Activated CD8-positive, alpha-beta memory T cell treated with anti-CD3 and anti-CD28 coated beads, Interleukin-2, amount 10 ng/mL, durations not matched to agents 7 days and 5 days (primary cell): ENCODE measurements at regions of chr12 and their contacts with region 1.

Region 1: DNA sequence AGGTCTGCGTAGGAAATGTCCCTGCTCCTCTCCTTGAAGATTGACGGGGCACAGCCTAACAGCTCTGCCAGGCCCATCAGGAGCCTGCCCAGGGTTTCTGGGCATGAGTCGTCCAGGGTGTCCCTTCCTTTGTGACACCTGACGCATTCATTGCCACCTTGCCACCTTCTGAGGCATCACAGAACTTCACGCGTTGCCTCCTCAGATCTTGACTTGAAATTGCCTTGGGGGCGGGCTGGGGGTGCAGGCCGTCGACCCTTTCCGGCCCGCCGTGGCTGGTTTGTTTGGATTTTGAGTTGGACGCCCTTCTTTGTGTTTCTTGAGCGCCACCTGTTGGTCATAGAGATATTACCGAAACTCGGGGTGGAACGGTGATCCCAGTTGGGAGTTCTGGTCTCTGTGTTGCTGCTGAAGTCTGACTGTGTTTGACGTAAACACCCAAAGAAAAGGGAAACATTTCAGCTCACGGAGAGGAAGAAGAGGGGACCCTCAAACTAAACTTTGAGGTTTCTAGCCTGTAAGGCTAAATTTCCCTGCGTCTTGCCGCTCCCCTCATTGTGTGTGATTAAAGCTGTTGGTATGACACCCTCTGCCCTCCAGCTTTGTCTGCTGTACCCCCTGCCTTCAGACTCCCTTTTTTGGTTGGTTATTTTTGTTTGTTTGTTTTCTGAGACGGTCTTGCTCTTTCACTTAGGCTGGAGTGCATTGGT is 44.6 kb downstream of the MLXIP start:
- DNase-seq: peak; percentile 77
- ATAC-seq: peak; percentile 73
- H3K4me3 Mint-ChIP-seq: no peak overlapping the region
- H3K27ac Mint-ChIP-seq: peak overlapping the region; percentile 48
- H3K4me1 Mint-ChIP-seq: peaks cover 19% of the 10 kb centered on the region
- H3K27me3 Mint-ChIP-seq: no peaks in the 10 kb centered on the region

Region 2: GRCh38 chr12:121802846-121803630 is 320.2 kb before region 1 on chr12:
- CTCF ChIA-PET with region 1: no interaction called
- DNase-seq: peak; percentile 95
- ATAC-seq: peak; percentile 68
- H3K4me3 Mint-ChIP-seq: peak overlapping the region; percentile 89
- H3K27ac Mint-ChIP-seq: peak overlapping the region; percentile 100
- H3K4me1 Mint-ChIP-seq: peaks cover 34% of the 10 kb centered on the region
- H3K27me3 Mint-ChIP-seq: no peaks in the 10 kb centered on the region

Region 3: GRCh38 chr12:122028165-122028904 is 94.9 kb before region 1 on chr12:
- CTCF ChIA-PET with region 1: interaction called, 12 read pairs
- DNase-seq: no peak
- ATAC-seq: no peak
- H3K4me3 Mint-ChIP-seq: no peak overlapping the region
- H3K27ac Mint-ChIP-seq: no peak overlapping the region
- H3K4me1 Mint-ChIP-seq: peaks cover 20% of the 10 kb centered on the region
- H3K27me3 Mint-ChIP-seq: peaks cover 63% of the 10 kb centered on the region

Region 4: GRCh38 chr12:122048151-122048550 is 75.1 kb before region 1 on chr12:
- CTCF ChIA-PET with region 1: interaction called, 130 read pairs
- DNase-seq: no peak
- ATAC-seq: no peak
- H3K4me3 Mint-ChIP-seq: no peak overlapping the region
- H3K27ac Mint-ChIP-seq: no peak overlapping the region
- H3K4me1 Mint-ChIP-seq: no peaks in the 10 kb centered on the region
- H3K27me3 Mint-ChIP-seq: no peaks in the 10 kb centered on the region

Region 5: GRCh38 chr12:122064025-122064777 is 59.0 kb before region 1 on chr12:
- CTCF ChIA-PET with region 1: interaction called, 17 read pairs
- DNase-seq: peak; percentile 50
- ATAC-seq: peak; percentile 70
- H3K4me3 Mint-ChIP-seq: no peak overlapping the region
- H3K27ac Mint-ChIP-seq: no peak overlapping the region
- H3K4me1 Mint-ChIP-seq: peaks cover 13% of the 10 kb centered on the region
- H3K27me3 Mint-ChIP-seq: no peaks in the 10 kb centered on the region

Region 6: DNA sequence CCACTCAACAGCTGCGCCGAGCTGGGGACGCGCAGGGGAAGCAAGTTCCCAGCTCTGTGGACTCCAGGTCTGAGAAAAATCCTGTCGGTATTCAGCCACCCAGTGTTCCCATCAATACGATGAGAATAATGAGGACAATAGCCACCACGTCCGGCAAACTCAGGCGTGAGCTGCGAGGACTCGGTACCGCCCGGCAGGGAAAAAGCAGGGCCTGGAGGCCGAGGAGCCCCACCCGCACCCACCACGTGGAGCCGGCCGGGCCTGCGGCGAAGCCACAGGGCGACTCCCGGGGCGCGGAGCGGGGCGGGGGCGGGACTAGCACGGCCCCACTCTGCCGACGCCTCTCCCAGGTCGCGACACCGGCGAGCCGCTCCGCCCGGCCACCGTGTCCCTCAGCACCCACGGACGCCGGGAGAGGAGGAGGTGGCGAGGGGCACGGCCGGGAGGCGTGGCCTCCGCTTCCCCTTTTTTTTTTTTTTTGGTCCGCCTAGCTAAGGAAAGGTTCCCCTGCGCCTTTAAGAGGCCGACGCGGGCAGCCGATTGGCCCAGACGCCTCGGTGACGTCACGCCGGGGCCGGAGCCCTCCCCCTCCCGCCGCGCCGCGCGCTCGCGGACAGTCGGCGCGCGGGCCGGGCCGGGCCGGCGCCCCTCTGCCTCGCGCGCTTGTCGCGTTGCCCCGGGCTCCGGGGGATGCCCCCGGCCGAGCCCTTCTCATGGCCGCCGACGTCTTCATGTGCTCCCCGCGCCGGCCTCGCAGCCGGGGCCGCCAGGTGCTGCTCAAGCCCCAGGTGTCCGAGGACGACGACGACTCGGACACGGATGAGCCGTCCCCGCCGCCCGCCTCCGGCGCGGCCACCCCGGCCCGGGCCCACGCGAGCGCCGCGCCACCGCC is 44.8 kb before region 1 on chr12 and contains the start of gene MLXIP:
- CTCF ChIA-PET with region 1: interaction called, 28 read pairs
- DNase-seq: peak; percentile 94
- ATAC-seq: peak; percentile 87
- H3K4me3 Mint-ChIP-seq: peak within 1 kb of the TSS; percentile 84
- H3K27ac Mint-ChIP-seq: peak within 1 kb of the TSS; percentile 88
- H3K4me1 Mint-ChIP-seq: peaks cover 43% of the 10 kb centered on the region
- H3K27me3 Mint-ChIP-seq: peaks cover under 1% of the 10 kb centered on the region
- total RNA-seq, gene MLXIP: 36.1 to 36.4 TPM

Region 7: DNA sequence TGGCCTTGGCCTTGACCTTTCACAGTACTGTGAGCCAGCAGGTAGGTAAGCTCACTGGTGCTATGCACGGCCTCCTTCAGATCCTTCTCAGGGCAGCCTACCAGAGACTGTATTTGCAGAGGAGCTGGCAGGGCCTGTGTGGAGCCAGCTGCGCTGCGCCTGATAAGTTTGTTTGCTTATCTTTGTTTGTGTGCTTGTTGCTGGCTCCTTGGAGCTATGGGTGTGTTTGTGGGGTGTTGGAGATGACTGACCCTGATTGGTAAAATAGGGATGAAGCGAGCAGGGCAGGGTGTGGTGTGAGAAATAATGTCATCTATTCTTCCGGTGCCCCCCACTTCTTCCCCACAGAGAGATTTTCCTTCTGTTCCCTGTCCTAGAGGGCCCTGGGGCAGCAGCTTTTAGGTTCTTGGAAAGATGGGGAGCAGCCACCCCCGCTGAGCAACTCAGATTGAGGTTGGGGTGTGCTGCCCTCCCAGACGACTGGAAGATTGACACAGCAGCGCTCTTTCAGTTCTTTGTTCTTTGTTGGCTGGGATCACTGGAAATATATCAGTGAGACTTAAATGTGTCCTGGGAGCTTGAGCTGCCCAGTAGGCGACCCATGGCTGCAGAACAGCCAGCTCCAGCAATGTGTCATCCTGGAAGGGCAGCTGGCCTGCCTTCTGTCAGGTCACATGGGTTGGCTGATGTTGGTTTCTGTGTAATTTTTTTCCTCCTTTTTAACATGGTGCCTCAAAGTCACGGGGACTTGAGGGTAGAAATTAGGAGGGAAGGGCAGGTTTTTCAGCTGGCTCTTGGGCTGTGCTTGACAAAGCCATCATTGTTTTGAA is 25.1 kb before region 1 on chr12:
- CTCF ChIA-PET with region 1: interaction called, 14 read pairs
- DNase-seq: no peak
- ATAC-seq: no peak
- H3K4me3 Mint-ChIP-seq: no peak overlapping the region
- H3K27ac Mint-ChIP-seq: no peak overlapping the region
- H3K4me1 Mint-ChIP-seq: peaks cover 41% of the 10 kb centered on the region
- H3K27me3 Mint-ChIP-seq: no peaks in the 10 kb centered on the region

Region 8: GRCh38 chr12:122107261-122107660 is 15.9 kb before region 1 on chr12:
- CTCF ChIA-PET with region 1: interaction called, 32 read pairs
- DNase-seq: no peak
- ATAC-seq: no peak
- H3K4me3 Mint-ChIP-seq: no peak overlapping the region
- H3K27ac Mint-ChIP-seq: no peak overlapping the region
- H3K4me1 Mint-ChIP-seq: peaks cover 54% of the 10 kb centered on the region
- H3K27me3 Mint-ChIP-seq: no peaks in the 10 kb centered on the region

Region 9: DNA sequence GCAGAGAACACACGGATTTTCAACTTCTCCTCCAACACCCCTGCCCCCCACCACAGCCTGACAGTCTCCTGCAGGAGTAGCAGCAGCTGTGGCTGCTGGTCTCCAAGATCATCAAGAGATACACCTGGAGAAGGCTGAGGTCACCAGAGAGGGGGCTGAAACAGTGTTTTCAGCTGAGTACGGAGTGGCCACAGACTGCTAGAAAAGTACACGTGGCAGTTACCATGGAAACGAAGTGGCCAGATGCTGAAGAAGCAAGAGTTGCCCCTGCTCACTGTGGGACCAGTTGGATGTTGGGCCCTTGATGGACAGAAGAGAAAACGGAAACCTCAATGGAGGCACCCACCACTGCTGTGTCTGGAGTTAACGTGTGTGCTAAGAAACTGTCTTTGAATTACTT is 107.6 kb after region 1 on chr12:
- CTCF ChIA-PET with region 1: no interaction called
- DNase-seq: no peak
- ATAC-seq: no peak
- H3K4me3 Mint-ChIP-seq: no peak overlapping the region
- H3K27ac Mint-ChIP-seq: no peak overlapping the region
- H3K4me1 Mint-ChIP-seq: peaks cover 20% of the 10 kb centered on the region
- H3K27me3 Mint-ChIP-seq: no peaks in the 10 kb centered on the region